ENCODE measurements at regions of chr3 and their contacts with region 1.

Region 1: DNA sequence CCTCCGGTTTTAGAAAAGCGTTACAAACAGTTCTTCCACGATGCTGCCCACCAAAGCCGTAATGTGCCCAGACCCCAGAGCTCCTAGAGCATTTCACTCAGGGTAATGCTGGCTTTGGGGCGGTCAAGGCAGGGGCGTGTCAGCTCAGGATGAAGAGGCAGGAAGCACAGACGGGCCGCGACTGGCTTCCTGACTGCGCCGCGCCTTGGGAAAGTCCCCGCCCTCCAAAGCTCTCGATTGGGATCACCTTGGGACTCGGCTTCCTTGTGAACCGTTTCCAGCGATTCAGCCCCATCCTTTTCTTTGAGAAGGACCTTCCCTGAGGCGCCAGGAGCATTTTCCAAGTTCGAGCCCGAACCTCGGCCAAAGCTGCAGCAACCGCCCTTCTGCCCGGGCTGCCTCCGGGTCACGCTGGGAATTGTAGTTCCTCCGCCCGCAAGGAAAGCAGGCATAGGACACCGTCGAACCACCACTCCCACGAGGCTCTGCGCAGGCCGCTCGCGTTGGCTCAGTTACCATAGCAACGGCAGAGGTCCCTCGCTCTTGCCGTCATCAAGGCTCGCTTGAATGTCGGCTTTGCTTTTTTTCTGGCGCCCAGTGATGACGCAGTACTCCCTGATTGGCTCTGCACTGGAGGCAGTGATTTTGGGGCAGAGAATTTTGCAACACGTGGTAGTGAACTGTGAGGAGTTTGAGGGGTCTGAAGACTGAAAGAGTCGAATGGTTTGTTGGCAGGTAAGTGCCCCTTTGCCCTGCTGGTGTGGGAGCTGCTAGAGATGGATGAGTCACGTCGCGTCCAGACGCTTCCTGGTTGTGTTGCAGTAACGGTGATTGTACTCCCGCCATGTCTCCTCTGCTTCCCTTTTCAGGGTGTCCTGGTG is at the starts of genes CCDC191 and QTRT2:
- DNase-seq: peak; percentile 100
- H3K4me3 Mint-ChIP-seq: peak within 1 kb of the TSS; percentile 93
- H3K27ac Mint-ChIP-seq: peak within 1 kb of the TSS; percentile 95
- H3K4me1 Mint-ChIP-seq: peaks cover 30% of the 10 kb centered on the region
- H3K27me3 Mint-ChIP-seq: peaks cover 2% of the 10 kb centered on the region
- total RNA-seq, gene CCDC191: 0.66 and 1.7 TPM in 2 replicates
- total RNA-seq, gene QTRT2: 50.5 and 55.3 TPM in 2 replicates

Region 2: GRCh38 chr3:113531826-113532697 is 524.3 kb before region 1 on chr3 and contains the start of gene SIDT1:
- intact Hi-C with region 1: loop called (anchors 10 kb)
- DNase-seq: peak; percentile 92
- H3K4me3 Mint-ChIP-seq: peak within 1 kb of the TSS; percentile 91
- H3K27ac Mint-ChIP-seq: peak within 1 kb of the TSS; percentile 96
- H3K4me1 Mint-ChIP-seq: peaks cover 36% of the 10 kb centered on the region
- H3K27me3 Mint-ChIP-seq: peaks cover 11% of the 10 kb centered on the region
- total RNA-seq, gene SIDT1: 8.5 and 11.5 TPM in 2 replicates

Region 3: GRCh38 chr3:113791381-113791780 is 265.0 kb before region 1 on chr3:
- intact Hi-C with region 1: no loop called
- DNase-seq: no peak
- H3K4me3 Mint-ChIP-seq: no peak overlapping the region
- H3K27ac Mint-ChIP-seq: no peak overlapping the region
- H3K4me1 Mint-ChIP-seq: no peaks in the 10 kb centered on the region
- H3K27me3 Mint-ChIP-seq: no peaks in the 10 kb centered on the region

Region 4: DNA sequence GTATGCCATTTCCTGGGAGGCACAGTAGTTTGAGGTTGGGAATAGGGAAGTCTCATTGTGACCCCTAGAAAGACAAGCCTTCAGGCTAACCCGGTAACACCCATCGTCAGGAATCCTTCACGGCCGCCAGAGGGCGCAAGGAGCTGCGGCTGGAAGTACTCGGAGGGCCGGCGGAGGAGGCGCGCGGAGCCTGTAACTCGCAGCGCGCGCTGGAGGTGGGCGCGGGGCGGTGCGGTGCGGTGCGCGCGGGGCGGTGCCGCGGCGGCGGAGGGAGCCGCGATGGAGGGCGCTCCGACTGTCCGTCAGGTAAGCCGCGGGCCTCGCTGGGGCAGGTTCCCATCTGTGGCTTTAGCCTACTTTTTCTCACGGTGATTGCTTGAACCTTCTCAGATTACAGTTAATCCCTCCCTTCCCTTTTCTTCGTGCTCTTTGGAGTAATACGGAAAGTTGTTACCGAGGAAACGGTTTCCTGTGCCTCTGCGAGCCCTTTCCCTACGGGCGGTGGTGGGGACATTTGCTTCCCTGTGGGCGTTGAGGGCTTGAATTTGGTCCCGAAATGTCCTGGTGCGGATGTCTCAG is 217.7 kb before region 1 on chr3 and contains the start of gene GRAMD1C:
- intact Hi-C with region 1: loop called (anchors 2 kb)
- DNase-seq: peak; percentile 95
- H3K4me3 Mint-ChIP-seq: peak within 1 kb of the TSS; percentile 82
- H3K27ac Mint-ChIP-seq: peak within 1 kb of the TSS; percentile 47
- H3K4me1 Mint-ChIP-seq: peaks cover 8% of the 10 kb centered on the region
- H3K27me3 Mint-ChIP-seq: peaks cover 5% of the 10 kb centered on the region
- total RNA-seq, gene GRAMD1C: not detected in 2 replicates

Region 5: GRCh38 chr3:114213627-114214541 is 157.5 kb after region 1 on chr3:
- intact Hi-C with region 1: loop called (anchors 1 kb)
- DNase-seq: peak; percentile 89
- H3K4me3 Mint-ChIP-seq: no peak overlapping the region
- H3K27ac Mint-ChIP-seq: no peak overlapping the region
- H3K4me1 Mint-ChIP-seq: peaks cover 23% of the 10 kb centered on the region
- H3K27me3 Mint-ChIP-seq: no peaks in the 10 kb centered on the region

Region 6: DNA sequence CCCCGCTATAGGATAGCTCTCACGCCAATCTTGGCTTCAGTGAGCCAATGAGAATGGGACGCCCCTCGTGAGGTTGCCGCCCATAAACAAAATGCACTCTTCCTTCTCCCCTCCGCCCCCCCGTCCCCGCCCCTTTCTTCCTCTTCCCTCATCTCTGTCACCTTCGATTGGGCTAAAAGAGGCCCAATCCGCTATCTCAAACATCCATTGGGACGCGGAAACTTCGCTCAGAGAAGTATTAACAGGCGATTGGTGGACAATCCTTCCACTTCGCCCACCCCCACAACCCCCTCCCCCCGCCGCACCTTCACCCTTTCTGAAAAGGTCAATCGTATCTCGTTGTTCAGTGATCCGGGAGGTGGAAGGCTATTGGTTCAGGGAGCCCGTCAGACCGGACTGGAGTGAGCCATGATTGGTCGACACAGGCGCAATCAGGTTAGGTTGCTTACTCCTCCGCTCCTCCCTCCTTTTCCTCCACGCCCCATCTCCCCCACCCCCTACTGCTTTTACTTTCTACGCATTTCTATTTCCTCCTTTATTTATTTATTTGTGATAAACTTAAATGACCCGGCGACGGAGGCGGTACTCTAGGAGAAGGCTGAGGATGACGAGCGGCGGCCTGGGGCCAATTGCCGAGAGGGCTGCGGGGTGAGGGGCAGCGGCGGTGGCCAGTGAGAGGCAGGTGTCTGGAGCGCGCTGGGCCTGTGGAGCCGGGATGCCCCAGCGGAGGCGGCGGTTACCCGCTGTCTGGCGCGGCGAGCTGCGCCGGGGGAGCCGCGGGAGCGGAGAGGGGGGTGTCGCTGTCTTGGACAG is 1091.2 kb after region 1 on chr3:
- intact Hi-C with region 1: loop called (anchors 1 kb)
- DNase-seq: peak; percentile 99
- H3K4me3 Mint-ChIP-seq: peak overlapping the region; percentile 91
- H3K27ac Mint-ChIP-seq: peak overlapping the region; percentile 98
- H3K4me1 Mint-ChIP-seq: peaks cover 16% of the 10 kb centered on the region
- H3K27me3 Mint-ChIP-seq: no peaks in the 10 kb centered on the region

Measured in activated CD4-positive, alpha-beta T cell treated with anti-CD3 and anti-CD28 coated beads, Interleukin-2, amount 10 ng/mL, durations not matched to agents 24 days and 14 days (primary cell).